ENCODE measurements at regions of chr3 and their contacts with region 1.

Region 1: GRCh38 chr3:184469423-184469822 is 89.6 kb downstream of the CHRD start:
- DNase-seq: peak in 1 of 2 donors; percentile 86
- H3K4me3 ChIP-seq: no peak overlapping the region
- CTCF ChIP-seq: peak in 1 of 3 donors; percentile 21
- POLR2A ChIP-seq: no peak

Region 2: DNA sequence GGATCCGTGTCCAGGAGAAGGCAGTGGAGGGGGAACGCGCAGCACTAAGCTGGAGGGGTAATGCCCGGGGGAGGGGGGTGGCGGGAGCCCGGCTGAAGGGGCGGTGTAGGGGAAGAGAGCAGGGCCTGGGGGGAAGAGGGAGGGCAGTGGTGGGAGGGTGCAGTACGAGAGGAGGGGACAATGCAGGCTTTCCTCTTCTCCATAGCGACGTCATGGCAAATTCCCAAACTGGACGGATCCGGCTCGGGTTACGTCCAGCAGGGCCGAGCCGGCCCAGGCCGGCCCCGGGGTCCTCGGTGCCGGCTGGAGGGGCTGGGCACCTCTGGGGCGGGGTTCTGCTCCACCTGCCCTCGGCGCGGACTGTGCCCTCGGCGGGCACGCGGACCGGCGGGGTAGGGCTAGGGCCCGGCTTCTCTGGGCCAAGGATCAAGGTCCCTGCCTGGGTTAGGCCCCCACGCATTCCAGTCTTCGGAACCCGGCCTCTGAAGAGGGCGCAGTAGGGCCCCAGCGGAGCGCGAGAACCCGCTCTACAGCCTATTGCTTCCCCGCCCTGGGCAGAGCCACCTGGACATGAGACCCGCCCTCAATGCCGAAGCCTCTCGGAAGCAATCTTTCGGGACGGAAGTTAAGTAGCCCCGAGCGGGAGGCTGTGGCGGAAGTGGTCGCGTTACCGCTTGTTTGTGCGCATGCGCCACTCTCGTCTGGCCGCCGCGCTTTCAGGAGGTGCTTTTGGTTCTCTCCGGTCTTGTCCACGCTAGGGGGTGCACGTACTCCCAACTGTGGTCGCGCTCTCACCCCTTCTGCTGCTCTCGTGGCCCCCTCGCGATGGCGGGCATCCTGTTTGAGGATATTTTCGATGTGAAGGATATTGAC is 106.5 kb before region 1 on chr3:
- intact Hi-C with region 1: loop called (anchors 5 kb)
- DNase-seq: peak; percentile 95 to 99
- H3K4me3 ChIP-seq: peak overlapping the region; percentile 69
- CTCF ChIP-seq: peak in 1 of 3 donors; percentile 42
- POLR2A ChIP-seq: no peak

Region 3: DNA sequence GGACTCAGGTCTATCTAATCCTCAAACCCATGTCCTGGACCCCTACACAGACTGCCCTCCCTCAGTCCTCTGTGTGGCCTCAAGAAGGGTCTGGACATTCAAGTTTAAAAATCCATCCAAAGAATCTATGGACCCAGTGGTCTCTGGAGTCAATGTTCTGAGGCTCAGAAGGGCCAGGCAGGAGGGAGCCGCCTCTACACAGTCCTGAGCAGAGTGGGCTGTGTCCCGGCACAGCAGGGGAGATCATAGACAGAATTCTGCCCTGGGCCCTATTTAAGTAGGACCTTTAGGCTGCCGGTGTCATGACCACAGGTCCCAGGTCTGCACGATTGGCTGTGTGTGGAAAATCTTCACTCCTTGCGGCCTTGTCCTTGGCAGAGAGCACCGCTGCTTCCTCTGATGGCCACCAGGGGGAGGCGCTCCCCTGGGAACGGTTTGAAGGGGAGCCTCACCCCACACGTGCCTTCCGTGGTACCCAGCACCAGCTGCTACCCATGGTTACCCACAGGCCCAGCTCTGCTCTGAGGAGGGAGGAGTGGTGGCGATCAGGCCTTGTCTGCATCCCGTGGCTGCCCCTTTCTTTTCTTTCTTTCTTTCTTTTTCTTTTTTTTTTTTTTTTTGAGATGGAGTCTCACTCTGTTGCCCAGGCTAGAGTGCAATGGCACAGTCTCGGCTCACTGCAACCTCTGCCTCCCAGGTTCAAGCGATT is 51.6 kb before region 1 on chr3:
- intact Hi-C with region 1: loop called (anchors 5 kb)
- DNase-seq: peak; percentile 67 to 96
- H3K4me3 ChIP-seq: no peak overlapping the region
- CTCF ChIP-seq: peak in 1 of 3 donors; percentile 91
- POLR2A ChIP-seq: no peak

Region 4: GRCh38 chr3:184543843-184544512 is 74.6 kb after region 1 on chr3:
- intact Hi-C with region 1: loop called (anchors 5 kb)
- DNase-seq: peak; percentile 85 to 94
- H3K4me3 ChIP-seq: no peak overlapping the region
- CTCF ChIP-seq: peak in 1 of 3 donors; percentile 78
- POLR2A ChIP-seq: no peak

Measured in lower leg skin (tissue), 4 donors.